Mammary epithelial cell (primary cell): ENCODE measurements at regions of chr6 and their contacts with region 1.

Region 1: DNA sequence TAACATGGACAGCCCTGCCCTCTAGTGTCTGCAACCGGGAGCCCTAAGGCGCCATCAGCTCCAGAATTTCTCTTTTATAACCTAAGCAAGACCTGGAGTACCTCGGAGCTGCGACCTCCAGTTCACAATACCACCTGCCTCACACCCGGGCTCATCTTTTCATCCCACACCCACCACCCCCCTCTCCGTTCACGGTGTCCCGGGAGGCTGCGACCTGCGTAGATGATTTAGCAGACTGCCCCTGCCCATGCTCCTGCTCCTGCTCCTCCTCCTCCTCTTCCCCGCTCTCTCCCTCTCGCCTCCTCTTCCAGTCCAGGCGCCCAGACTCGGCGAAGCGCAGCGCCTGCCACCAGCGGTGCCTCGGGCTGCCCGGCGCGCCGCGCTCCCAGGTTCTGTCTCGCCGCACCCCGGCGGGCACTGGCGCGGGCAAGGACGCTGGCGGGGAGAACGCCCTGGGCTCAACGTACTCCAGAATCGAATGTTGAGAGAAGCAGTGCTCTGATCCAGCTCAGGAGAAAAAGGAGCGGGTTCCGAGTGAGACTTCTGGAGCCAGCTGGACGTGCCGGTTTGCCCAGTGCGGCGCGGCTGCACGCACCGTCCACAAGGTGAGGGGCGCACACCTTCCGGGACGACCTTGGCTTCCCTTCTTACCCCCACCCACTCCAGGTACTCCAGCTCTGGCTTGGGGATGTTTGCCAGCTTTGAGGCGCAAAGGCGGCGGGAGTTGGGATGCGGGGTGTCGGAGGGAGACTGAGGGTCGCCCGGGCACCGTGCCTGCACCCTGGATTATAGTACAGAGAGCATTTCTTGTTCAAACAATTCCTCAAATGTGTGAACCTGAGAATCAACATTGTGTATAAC is at the start of gene HTR1E:
- DNase-seq: peak; percentile 23
- H3K4me3 ChIP-seq: peak within 1 kb of the TSS; percentile 4 to 23 (median 8)
- H3K27ac ChIP-seq: no peak within 1 kb of the TSS
- H3K4me1 ChIP-seq: peaks cover 6% of the 10 kb centered on the region
- H3K27me3 ChIP-seq: peaks cover 23% of the 10 kb centered on the region
- CTCF ChIP-seq: peak; percentile 38 to 63
- total RNA-seq, gene HTR1E: not detected

Region 2: GRCh38 chr6:85923013-85923430 is 1014.4 kb before region 1 on chr6:
- CTCF ChIA-PET with region 1: no interaction called
- dilution Hi-C with region 1: no loop called
- in situ Hi-C with region 1: no loop called
- intact Hi-C with region 1: loop called (anchors 1 kb)
- DNase-seq: peak; percentile 60
- H3K4me3 ChIP-seq: no peak overlapping the region
- H3K27ac ChIP-seq: no peak overlapping the region
- H3K4me1 ChIP-seq: no peaks in the 10 kb centered on the region
- H3K27me3 ChIP-seq: no peaks in the 10 kb centered on the region
- CTCF ChIP-seq: peak; percentile 58 to 82

Region 3: GRCh38 chr6:86888301-86888700 is 49.1 kb before region 1 on chr6:
- CTCF ChIA-PET with region 1: no interaction called
- dilution Hi-C with region 1: no loop called
- in situ Hi-C with region 1: no loop called
- intact Hi-C with region 1: no loop called
- DNase-seq: no peak
- H3K4me3 ChIP-seq: no peak overlapping the region
- H3K27ac ChIP-seq: no peak overlapping the region
- H3K4me1 ChIP-seq: no peaks in the 10 kb centered on the region
- H3K27me3 ChIP-seq: no peaks in the 10 kb centered on the region
- CTCF ChIP-seq: no peak

Region 4: DNA sequence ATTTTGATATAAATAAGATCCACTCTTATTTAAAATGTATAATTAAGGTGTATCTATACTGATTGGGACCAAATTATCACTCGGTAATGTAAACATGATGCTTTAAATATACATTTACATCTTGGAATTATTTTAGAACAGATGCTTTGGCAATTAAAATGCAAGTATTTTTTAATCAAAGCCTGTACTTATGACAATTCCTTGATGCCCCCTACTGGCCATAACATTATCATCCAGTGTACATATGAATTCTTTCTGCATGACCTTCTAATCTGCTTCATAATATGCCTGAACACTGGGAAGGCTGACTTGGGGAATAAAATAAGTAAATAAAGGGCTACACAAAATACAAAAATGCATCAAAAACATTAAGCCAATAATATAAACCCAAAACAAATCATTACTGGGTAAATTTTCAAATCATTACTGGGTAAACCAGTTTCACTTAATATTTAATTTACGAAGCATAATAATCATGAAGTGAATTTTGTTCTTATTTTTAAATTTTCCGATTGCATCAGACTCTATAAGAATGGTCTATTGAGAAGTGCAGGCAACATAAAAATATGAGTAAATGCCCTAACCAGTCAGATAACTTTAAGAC is 92.4 kb after region 1 on chr6:
- CTCF ChIA-PET with region 1: no interaction called
- dilution Hi-C with region 1: no loop called
- in situ Hi-C with region 1: no loop called
- intact Hi-C with region 1: loop called (anchors 5 kb)
- DNase-seq: peak; percentile 27
- H3K4me3 ChIP-seq: no peak overlapping the region
- H3K27ac ChIP-seq: no peak overlapping the region
- H3K4me1 ChIP-seq: no peaks in the 10 kb centered on the region
- H3K27me3 ChIP-seq: no peaks in the 10 kb centered on the region
- CTCF ChIP-seq: peak; percentile 64 to 71